Left cardiac atrium (tissue), 4 donors: ENCODE measurements at regions of chr1 and their contacts with region 1.

Region 1: DNA sequence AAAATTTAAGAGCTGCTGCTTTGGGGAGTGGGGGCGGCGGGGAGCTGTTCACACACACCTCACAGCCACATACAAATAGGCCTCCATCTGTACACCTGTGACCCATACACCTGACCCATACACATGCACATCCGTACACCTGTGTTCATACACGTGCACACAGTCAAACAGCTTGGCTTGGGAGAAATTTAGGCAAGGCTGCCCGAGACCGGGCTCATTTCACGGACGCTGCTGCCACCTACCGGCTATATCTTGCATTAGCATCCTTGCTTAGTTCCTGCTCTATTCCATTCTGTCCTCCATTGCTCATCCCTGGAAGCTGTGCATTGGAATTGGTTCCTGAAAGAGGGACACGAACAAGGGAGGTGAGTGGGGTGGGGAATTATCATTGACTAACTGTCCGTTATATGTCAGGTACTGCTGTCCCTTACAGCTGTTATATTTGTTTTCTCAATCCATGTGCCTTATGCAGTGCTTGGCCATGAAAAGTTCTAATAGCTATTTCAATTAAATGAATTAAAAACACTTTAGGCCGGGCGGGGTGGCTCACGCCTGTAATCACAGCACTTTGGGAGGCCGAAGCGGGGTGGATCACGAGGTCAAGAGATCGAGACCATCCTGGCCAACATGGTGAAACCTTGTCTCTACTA is 37.1 kb upstream of the EPB41 start:
- DNase-seq: peak; percentile 72
- ATAC-seq: peak; percentile 58 to 84

Region 2: DNA sequence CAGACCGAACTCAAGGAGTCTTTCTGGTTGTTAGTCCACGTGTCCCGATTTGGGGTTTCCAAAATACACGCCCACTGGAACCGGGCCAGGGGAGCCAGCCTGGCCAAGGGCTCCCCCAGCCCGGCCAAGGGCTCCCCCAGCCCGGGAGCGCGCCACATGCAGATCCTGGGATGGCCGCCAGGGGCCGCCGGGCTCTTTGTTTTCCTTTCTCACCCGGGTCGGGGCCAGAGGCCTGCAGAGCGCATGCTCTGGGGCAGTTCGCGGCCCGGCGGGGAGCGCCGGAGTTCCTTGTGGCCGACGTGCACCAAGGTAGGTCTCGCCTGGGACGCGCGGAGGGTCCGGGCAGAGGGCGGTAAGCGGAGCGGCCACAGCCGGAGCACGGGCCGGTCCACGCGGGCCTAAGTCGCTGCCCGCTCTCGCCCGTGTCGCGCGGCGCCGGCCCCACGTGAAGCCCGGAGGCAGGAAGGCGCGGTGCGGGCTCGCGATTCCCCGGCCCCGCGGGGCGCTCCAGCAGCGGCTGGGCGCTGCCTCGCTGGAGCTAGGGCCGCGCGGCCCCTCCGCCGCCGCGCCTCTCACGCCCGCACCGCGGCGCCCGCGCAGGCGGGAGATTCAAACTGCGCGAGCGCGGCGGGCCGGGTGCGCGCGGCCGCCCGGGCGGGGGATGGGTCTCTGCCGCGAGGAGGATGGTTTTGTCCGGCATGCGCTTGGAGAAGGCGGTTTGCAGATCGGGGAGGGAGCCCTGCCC is 359.1 kb before region 1 on chr1:
- intact Hi-C with region 1: loop called in 1 of 2 experiments (anchors 5 kb)
- DNase-seq: peak; percentile 94
- ATAC-seq: peak; percentile 91 to 95

Region 3: DNA sequence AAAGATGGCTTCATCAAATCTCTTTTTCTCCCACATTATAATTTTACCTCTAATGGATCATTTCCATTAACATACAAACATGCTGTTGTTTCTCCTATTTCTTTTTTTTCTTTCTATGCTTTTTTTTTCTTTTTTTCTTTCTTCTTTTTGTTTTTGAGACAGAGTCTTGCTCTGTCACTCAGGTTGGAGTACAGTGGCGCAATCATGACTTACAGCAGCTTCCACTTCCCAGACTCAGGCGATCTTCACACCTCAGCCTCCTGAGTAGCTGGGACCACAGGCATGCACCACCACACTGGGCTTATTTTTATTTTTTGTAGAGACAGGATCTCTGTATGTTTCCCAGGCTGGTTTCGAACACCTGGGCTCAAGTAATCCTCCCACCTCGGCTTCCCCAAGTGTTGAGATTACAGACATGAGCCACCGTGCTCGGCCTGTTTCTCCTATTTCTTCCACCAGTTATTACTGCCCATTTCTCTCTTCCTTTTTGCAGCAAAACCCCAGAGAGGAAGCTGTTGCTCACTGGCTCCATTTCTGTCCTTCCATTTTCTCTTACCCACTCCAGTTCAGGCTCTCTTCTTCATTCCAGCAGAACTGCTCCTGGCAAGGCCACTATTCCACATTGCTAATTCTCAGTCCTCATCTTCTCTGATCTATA is 97.4 kb before region 1 on chr1:
- intact Hi-C with region 1: loop called (anchors 1 to 2 kb)
- DNase-seq: no peak
- ATAC-seq: no peak

Region 4: GRCh38 chr1:28950449-28950848 is 73.2 kb after region 1 on chr1:
- intact Hi-C with region 1: no loop called
- DNase-seq: no peak
- ATAC-seq: no peak